ENCODE measurements at regions of chr2 and their contacts with region 1.

Region 1: GRCh38 chr2:224122542-224122941 is 83.5 kb upstream of the SERPINE2 start:
- DNase-seq: no peak
- H3K4me3 ChIP-seq: no peak overlapping the region
- CTCF ChIP-seq: no peak

Region 2: DNA sequence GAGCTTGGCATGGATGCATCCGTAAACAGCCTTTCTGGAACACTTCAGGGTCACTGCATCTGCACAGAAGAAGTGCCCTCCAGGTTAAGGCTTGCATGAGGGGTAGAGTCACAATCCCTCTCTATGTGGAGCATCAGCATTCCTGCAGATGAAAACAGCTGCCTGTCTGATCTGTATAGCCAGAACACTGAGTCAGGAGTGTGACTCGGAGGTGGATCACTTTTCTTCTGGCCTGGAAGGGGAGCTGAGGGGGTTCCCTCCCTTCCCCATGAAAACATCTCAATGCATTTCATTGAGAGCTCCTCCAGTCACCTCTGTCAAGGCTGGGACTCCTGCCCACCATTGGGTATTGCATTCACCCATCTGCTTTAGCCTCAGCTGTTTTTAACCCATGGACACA is 11.0 kb before region 1 on chr2:
- CTCF ChIA-PET with region 1: interaction called, 12 read pairs
- POLR2A ChIA-PET with region 1: interaction called, 3 read pairs
- DNase-seq: no peak
- H3K4me3 ChIP-seq: no peak overlapping the region
- CTCF ChIP-seq: no peak

Region 3: GRCh38 chr2:224308272-224308911 is 185.8 kb after region 1 on chr2:
- CTCF ChIA-PET with region 1: no interaction called
- POLR2A ChIA-PET with region 1: no interaction called
- DNase-seq: no peak
- H3K4me3 ChIP-seq: no peak overlapping the region
- CTCF ChIP-seq: no peak

Measured in AG04449 (cell line).